CD8-positive, alpha-beta memory T cell (primary cell): ENCODE measurements at regions of chr17 and their contacts with region 1.

Region 1: GRCh38 chr17:74296548-74296936 is 22.5 kb downstream of the DNAI2 start:
- DNase-seq: peak in 1 of 5 donors; percentile 60
- H3K4me3 ChIP-seq: no peak overlapping the region
- H3K4me3 Mint-ChIP-seq: peak overlapping the region in 1 of 7 donors; percentile 54
- H3K27ac ChIP-seq: peak overlapping the region; percentile 75
- H3K27ac Mint-ChIP-seq: peak overlapping the region in 3 of 8 donors; percentile 29 to 73 (median 55)
- H3K4me1 ChIP-seq: peaks cover 5% of the 10 kb centered on the region
- H3K4me1 Mint-ChIP-seq: peaks cover 19 to 22% (median 22%) of the 10 kb centered on the region in 3 donors
- H3K27me3 ChIP-seq: no peaks in the 10 kb centered on the region
- H3K27me3 Mint-ChIP-seq: no peaks in the 10 kb centered on the region

Region 2: DNA sequence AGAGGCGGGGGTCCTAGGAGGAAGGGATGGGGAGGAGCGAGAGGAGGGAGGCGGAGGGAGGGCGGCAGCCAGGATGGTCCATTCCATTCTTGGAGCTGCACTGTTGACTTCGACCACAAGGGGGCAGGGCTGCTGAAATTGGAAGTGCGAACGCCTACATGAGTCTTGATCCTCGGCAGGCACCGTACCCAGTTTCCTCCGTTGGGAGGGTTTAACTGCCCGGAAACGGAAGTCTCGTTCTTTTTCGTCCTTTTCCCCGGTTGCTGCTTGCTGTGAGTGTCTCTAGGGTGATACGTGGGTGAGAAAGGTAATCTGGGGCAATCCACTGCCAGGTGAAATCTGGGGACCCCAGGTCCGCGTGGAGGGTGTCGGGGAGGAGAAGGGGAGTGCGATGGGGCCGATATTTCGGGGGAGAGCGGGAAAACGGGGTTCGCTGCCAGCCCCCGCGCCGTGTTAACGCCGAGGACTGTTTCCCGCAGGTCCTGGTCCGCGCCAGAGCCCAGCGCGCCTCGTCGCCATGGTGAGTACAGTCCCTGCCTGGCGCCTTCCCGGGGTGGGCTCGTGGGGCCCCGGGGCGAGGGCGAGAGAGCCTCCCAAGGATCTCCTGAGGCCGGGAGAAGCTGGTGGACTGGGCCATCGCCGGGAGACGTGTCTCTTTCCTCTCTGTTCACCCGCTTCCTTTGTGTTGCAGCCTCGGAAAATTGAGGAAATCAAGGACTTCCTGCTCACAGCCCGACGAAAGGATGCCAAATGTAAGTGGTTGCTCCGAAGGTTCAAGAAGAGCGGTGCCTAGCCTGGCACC is 92.9 kb before region 1 on chr17 and contains the start of gene RPL38:
- CTCF ChIA-PET with region 1: interaction called, 42 read pairs
- POLR2A ChIA-PET with region 1: interaction called, 6 read pairs
- DNase-seq: peak; percentile 91 to 97 (median 94)
- H3K4me3 ChIP-seq: peak within 1 kb of the TSS; percentile 90
- H3K4me3 Mint-ChIP-seq: peak within 1 kb of the TSS; percentile 92 to 99 (median 97)
- H3K27ac ChIP-seq: peak within 1 kb of the TSS; percentile 86
- H3K27ac Mint-ChIP-seq: peak within 1 kb of the TSS; percentile 86 to 99 (median 96)
- H3K4me1 ChIP-seq: peaks cover 43% of the 10 kb centered on the region
- H3K4me1 Mint-ChIP-seq: peaks cover 34 to 50% (median 46%) of the 10 kb centered on the region in 3 donors
- H3K27me3 ChIP-seq: peaks cover 7% of the 10 kb centered on the region
- H3K27me3 Mint-ChIP-seq: peaks cover 14 to 33% of the 10 kb centered on the region in 2 donors
- total RNA-seq, gene RPL38: 1,457 to 1,489 TPM

Region 3: DNA sequence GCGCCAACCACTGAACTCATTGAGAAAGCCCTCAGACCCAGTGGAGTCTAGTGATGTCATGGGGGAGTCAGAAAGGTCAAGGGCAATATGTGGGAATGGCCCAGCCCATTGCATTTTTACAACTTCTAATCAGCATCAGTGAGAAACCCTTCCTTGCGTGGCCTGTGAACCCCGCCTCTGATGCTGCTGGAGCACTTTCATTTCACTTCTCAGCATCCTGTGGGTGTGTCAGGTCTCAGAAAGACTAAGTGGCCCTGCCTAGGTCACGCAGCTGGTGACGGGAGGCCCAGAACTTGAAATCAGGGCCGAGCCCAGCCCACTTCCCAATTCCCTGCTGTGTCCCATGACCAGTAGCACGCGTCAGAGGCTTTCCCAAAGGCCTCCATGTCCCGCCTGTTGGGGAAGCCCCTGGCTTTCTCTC is 16.4 kb before region 1 on chr17:
- CTCF ChIA-PET with region 1: interaction called, 52 read pairs
- POLR2A ChIA-PET with region 1: no interaction called
- DNase-seq: peak in 4 of 5 donors; percentile 46 to 73 (median 59)
- H3K4me3 ChIP-seq: peak overlapping the region; percentile 36
- H3K4me3 Mint-ChIP-seq: peak overlapping the region in 6 of 7 donors; percentile 9 to 61 (median 44)
- H3K27ac ChIP-seq: peak overlapping the region; percentile 88
- H3K27ac Mint-ChIP-seq: peak overlapping the region; percentile 77 to 99 (median 96)
- H3K4me1 ChIP-seq: peaks cover 60% of the 10 kb centered on the region
- H3K4me1 Mint-ChIP-seq: peaks cover 40 to 79% (median 58%) of the 10 kb centered on the region in 3 donors
- H3K27me3 ChIP-seq: no peaks in the 10 kb centered on the region
- H3K27me3 Mint-ChIP-seq: no peaks in the 10 kb centered on the region

Region 4: GRCh38 chr17:74325743-74326379 is 29.3 kb after region 1 on chr17 and contains the start of gene KIF19:
- CTCF ChIA-PET with region 1: no interaction called
- POLR2A ChIA-PET with region 1: no interaction called
- DNase-seq: peak in 4 of 5 donors; percentile 42 to 64 (median 53)
- H3K4me3 ChIP-seq: peak within 1 kb of the TSS; percentile 37
- H3K4me3 Mint-ChIP-seq: peak within 1 kb of the TSS; percentile 64 to 86 (median 68)
- H3K27ac ChIP-seq: no peak within 1 kb of the TSS
- H3K27ac Mint-ChIP-seq: peak within 1 kb of the TSS in 4 of 8 donors; percentile 10 to 89 (median 58)
- H3K4me1 ChIP-seq: peaks cover 24% of the 10 kb centered on the region
- H3K4me1 Mint-ChIP-seq: peaks cover 22 to 41% (median 22%) of the 10 kb centered on the region in 3 donors
- H3K27me3 ChIP-seq: no peaks in the 10 kb centered on the region
- H3K27me3 Mint-ChIP-seq: peaks cover 0 to 4% of the 10 kb centered on the region in 2 donors
- total RNA-seq, gene KIF19: 0.20 to 0.24 TPM

Region 5: DNA sequence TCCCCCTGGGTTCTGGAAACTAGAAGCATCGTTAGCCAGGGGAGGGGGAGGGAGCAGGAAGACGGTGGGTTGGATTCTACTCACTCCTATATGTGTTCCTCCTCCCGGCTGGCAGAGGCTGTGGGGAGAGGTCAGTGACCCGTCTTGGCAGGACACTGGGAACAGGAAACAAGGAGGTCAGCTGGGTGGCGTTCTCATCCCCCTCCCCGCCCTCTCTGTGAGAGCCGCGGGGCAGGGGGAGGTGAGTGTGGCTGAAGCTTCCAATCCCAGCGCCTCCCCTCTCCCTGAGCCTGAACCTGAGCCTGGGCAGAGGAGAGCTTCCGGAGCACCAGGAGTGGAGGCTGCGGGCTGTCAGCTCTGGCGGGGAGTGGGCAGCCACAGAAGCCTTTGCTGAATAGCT is 147.9 kb after region 1 on chr17:
- CTCF ChIA-PET with region 1: no interaction called
- POLR2A ChIA-PET with region 1: no interaction called
- DNase-seq: no peak
- H3K4me3 ChIP-seq: no peak overlapping the region
- H3K4me3 Mint-ChIP-seq: no peak overlapping the region
- H3K27ac ChIP-seq: no peak overlapping the region
- H3K27ac Mint-ChIP-seq: no peak overlapping the region
- H3K4me1 ChIP-seq: no peaks in the 10 kb centered on the region
- H3K4me1 Mint-ChIP-seq: peaks cover 0 to 9% (median 4%) of the 10 kb centered on the region in 3 donors
- H3K27me3 ChIP-seq: no peaks in the 10 kb centered on the region
- H3K27me3 Mint-ChIP-seq: peaks cover 5 to 6% of the 10 kb centered on the region in 2 donors